ENCODE measurements at regions of chr6 and their contacts with region 1.

Region 1: DNA sequence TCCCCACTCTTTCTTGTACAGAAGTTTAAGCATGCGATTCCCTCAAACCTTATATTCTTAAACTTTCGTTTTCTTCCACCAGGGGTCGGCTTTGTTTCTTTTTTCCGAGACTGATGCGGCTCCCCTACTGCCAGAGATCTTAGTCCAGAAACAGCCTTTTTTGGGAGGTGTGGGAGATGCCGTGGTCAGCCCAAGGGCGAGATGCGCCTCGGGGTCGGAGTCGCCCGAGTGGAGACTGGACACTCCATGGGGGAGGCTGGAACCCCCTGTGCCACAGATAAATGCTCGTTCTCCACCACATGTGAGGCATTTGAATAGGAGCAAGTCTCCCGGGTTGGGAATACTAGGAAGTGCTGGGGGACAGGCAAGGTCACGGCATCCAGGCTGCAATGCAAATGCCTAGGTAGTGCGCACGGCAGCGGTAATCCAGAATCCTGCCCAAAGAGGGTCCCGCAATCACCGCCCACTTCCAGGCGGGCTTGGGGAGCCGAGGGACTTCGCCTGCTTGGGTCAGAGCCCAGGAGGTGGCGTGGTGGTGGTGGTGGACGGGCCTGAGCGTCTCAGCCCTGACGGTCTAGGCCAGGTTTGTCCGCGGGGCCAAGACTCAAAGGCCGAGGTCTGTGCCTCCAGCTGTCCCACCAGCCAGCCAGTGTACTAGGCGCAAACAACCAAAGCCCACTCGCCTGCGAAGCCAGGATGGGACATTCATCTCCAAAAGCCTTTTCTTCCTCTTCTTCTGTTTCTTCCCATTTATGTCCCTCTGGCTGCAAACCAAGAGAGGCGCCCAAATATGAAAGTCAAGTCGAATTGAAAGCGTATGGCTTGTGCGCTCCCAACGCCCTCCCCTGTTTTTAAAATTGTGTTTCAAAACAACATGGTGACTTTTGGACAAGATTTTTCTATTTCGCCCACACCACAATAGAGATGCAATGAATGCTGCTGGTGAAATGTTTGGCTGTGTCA is 39.3 kb upstream of the OSTM1 start:
- DNase-seq: peak; percentile 67
- H3K4me3 ChIP-seq: no peak overlapping the region
- H3K27ac ChIP-seq: no peak overlapping the region
- H3K4me1 ChIP-seq: peaks cover 24% of the 10 kb centered on the region
- H3K27me3 ChIP-seq: peaks cover 57 to 70% of the 10 kb centered on the region in 2 experiments
- CTCF ChIP-seq: peak; percentile 16 to 32
- POLR2A ChIP-seq: no peak

Region 2: GRCh38 chr6:108080010-108080780 is 33.6 kb before region 1 on chr6:
- CTCF ChIA-PET with region 1: no interaction called
- POLR2A ChIA-PET with region 1: no interaction called
- dilution Hi-C with region 1: no loop called
- intact Hi-C with region 1: no loop called
- DNase-seq: no peak
- H3K4me3 ChIP-seq: no peak overlapping the region
- H3K27ac ChIP-seq: no peak overlapping the region
- H3K4me1 ChIP-seq: no peaks in the 10 kb centered on the region
- H3K27me3 ChIP-seq: peaks cover 5% of the 10 kb centered on the region in 2 experiments
- CTCF ChIP-seq: no peak
- POLR2A ChIP-seq: no peak

Region 3: GRCh38 chr6:108168501-108169463 is 54.9 kb after region 1 on chr6:
- CTCF ChIA-PET with region 1: interaction called, 3 read pairs
- POLR2A ChIA-PET with region 1: no interaction called
- dilution Hi-C with region 1: no loop called
- intact Hi-C with region 1: loop called (anchors 2 kb)
- DNase-seq: no peak
- H3K4me3 ChIP-seq: no peak overlapping the region
- H3K27ac ChIP-seq: no peak overlapping the region
- H3K4me1 ChIP-seq: peaks cover 4% of the 10 kb centered on the region
- H3K27me3 ChIP-seq: peaks cover 90 to 100% of the 10 kb centered on the region in 2 experiments
- CTCF ChIP-seq: peak; percentile 8 to 48
- POLR2A ChIP-seq: no peak

Region 4: DNA sequence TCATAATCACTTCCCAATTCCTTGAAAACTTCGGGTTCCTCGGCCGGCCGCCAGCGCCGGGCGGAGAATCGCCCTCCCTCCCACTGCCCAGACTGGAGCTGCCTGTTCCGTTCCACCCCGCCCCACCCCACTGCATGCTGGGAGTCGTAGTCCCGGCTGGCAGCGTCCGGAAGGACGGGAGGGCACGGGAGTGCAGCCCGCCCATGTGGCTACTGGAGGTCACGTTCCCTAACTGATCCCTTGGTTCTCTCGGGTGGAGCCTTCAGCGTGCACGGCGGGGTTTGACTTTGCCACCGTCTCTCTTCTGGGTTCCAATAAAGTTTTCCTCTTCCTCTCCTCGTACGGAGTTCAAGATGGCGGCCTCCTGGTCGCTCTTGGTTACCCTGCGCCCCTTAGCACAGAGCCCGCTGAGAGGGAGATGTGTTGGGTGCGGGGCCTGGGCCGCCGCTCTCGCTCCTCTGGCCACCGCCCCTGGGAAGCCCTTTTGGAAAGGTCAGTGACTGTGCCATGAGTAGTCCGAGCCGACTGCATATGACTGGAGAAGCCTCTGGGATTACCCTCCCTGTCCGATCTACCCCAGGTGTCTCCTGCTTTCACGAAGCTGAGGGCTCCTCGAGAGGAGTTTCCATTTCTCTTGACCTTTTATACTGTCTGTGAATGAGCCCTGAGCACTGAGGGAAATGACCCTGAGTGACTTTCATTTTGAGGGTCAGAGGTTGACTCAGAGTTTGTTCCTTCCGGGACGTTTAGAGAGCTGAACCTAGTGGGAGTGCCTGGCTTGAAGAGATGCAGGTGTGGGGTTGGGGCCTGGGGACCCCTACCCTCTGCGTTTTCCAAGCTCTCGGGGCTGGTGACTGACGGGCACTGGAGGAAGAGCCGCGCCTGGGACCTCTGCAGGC is 181.1 kb after region 1 on chr6 and contains the start of gene AFG1L:
- CTCF ChIA-PET with region 1: interaction called, 3 read pairs
- POLR2A ChIA-PET with region 1: no interaction called
- dilution Hi-C with region 1: no loop called
- intact Hi-C with region 1: loop called (anchors 2 kb)
- DNase-seq: peak; percentile 90
- H3K4me3 ChIP-seq: peak within 1 kb of the TSS; percentile 51 to 72 (median 58)
- H3K27ac ChIP-seq: peak within 1 kb of the TSS; percentile 72
- H3K4me1 ChIP-seq: peaks cover 10% of the 10 kb centered on the region
- H3K27me3 ChIP-seq: no peaks in the 10 kb centered on the region
- CTCF ChIP-seq: no peak
- POLR2A ChIP-seq: peak; percentile 49
- total RNA-seq, gene AFG1L: 6.0 and 6.2 TPM in 2 replicates

Region 5: GRCh38 chr6:108497883-108498282 is 384.0 kb after region 1 on chr6:
- CTCF ChIA-PET with region 1: interaction called, 212 read pairs
- POLR2A ChIA-PET with region 1: no interaction called
- dilution Hi-C with region 1: no loop called
- intact Hi-C with region 1: loop called (anchors 1 kb)
- DNase-seq: peak; percentile 59
- H3K4me3 ChIP-seq: no peak overlapping the region
- H3K27ac ChIP-seq: no peak overlapping the region
- H3K4me1 ChIP-seq: no peaks in the 10 kb centered on the region
- H3K27me3 ChIP-seq: no peaks in the 10 kb centered on the region
- CTCF ChIP-seq: peak; percentile 48 to 69
- POLR2A ChIP-seq: no peak

Region 6: GRCh38 chr6:108526739-108527174 is 412.9 kb after region 1 on chr6:
- CTCF ChIA-PET with region 1: interaction called, 22 read pairs
- POLR2A ChIA-PET with region 1: no interaction called
- dilution Hi-C with region 1: no loop called
- intact Hi-C with region 1: loop called (anchors 1 kb)
- DNase-seq: peak; percentile 52
- H3K4me3 ChIP-seq: no peak overlapping the region
- H3K27ac ChIP-seq: no peak overlapping the region
- H3K4me1 ChIP-seq: no peaks in the 10 kb centered on the region
- H3K27me3 ChIP-seq: peaks cover 0 to 2% of the 10 kb centered on the region in 2 experiments
- CTCF ChIP-seq: peak; percentile 59 to 65
- POLR2A ChIP-seq: no peak